IMR-90 (cell line): ENCODE measurements at regions of chr11 and their contacts with region 1.

Region 1: DNA sequence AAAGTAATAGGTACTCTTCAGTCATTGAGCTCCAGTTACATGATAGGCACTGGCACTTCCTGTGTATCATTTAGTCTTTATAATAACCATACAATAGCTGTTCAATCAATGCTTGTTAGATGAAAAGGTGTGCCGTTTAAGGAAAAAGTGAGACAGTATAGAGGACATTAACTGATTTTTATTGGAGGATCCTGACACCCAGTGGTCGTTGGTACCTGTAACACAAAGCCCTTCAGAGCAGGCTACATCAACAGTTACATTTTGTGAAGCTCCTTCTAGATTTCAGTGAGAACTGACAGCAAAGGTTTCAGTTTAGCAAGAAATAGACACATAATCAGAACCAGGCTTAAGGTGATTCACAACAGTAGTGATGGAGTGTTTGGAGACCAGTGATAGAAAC is 44.2 kb downstream of the CCDC81 start:
- DNase-seq: peak; percentile 28
- ATAC-seq: peak; percentile 55
- H3K4me3 ChIP-seq: no peak overlapping the region
- H3K27ac ChIP-seq: no peak overlapping the region
- H3K4me1 ChIP-seq: peaks cover 4% of the 10 kb centered on the region
- H3K27me3 ChIP-seq: no peaks in the 10 kb centered on the region
- CTCF ChIP-seq: peak; percentile 35; the same call in 1 of the 2 replicates
- POLR2A ChIP-seq: no peak
- RAD21 ChIP-seq: peak; percentile 27

Region 2: GRCh38 chr11:86360775-86361395 is 58.0 kb before region 1 on chr11:
- CTCF ChIA-PET with region 1: interaction called, 8 read pairs
- POLR2A ChIA-PET with region 1: no interaction called
- dilution Hi-C with region 1: no loop called
- in situ Hi-C with region 1: loop called (anchors 5 kb)
- intact Hi-C with region 1: loop called (anchors 2 kb)
- DNase-seq: peak; percentile 73
- ATAC-seq: peak; percentile 89
- H3K4me3 ChIP-seq: no peak overlapping the region
- H3K27ac ChIP-seq: no peak overlapping the region
- H3K4me1 ChIP-seq: peaks cover 3% of the 10 kb centered on the region; the same call in 1 of the 2 replicates
- H3K27me3 ChIP-seq: no peaks in the 10 kb centered on the region
- CTCF ChIP-seq: peak; percentile 63
- POLR2A ChIP-seq: no peak
- RAD21 ChIP-seq: peak; percentile 68